Gastrocnemius medialis (tissue), 4 donors: ENCODE measurements at regions of chr16 and their contacts with region 1.

Region 1: DNA sequence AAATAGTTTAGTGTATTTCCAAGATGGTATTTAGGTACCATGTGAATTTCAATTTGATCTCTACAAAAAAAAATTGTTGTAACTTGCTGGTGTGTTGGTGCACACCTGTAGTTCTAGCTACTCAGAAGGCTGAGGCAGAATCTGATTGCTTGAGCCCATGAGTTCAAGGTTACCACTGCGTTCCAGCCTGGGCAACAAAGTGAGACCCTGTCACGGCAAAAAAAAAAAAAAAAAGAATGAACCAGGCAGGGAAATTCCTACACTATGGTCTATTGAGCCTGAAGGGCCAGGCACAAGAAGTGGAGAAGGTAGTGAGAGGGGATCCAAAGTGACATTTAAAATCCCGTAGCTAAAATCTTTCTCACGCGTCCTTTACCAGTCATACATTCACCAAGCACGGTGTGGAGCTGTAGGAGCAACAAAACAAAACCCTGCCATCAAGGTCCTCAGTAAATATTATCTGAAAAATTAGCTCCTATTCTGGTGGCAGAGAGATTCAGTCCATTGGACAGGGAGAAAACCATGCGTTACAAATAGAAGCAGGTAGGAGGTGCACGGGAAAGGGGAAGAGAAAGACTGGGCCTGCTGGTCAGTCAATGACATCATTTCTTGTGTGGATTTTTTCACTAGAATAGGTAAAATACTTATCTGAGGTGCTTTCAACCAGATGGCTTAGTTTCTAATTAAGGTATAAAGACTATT is 27.3 kb downstream of the TXNDC11 start:
- DNase-seq: no peak
- ATAC-seq: no peak
- H3K4me3 ChIP-seq: no peak overlapping the region
- H3K27ac ChIP-seq: peak overlapping the region; percentile 78 to 95 (median 88)
- H3K4me1 ChIP-seq: peaks cover 12 to 37% of the 10 kb centered on the region in 2 donors
- H3K27me3 ChIP-seq: no peaks in the 10 kb centered on the region
- CTCF ChIP-seq: no peak
- POLR2A ChIP-seq: no peak

Region 2: GRCh38 chr16:11396241-11397048 is 319.0 kb before region 1 on chr16:
- in situ Hi-C with region 1: loop called in 2 of 4 experiments (anchors 5 kb)
- intact Hi-C with region 1: loop called (anchors 2 kb)
- DNase-seq: peak; percentile 50 to 77
- ATAC-seq: peak; percentile 67 to 74
- H3K4me3 ChIP-seq: no peak overlapping the region
- H3K27ac ChIP-seq: peak overlapping the region in 2 of 4 donors; percentile 10 to 75
- H3K4me1 ChIP-seq: peaks cover 3 to 4% of the 10 kb centered on the region in 2 donors
- H3K27me3 ChIP-seq: no peaks in the 10 kb centered on the region
- CTCF ChIP-seq: peak; percentile 97 to 99 (median 98)
- POLR2A ChIP-seq: no peak

Region 3: DNA sequence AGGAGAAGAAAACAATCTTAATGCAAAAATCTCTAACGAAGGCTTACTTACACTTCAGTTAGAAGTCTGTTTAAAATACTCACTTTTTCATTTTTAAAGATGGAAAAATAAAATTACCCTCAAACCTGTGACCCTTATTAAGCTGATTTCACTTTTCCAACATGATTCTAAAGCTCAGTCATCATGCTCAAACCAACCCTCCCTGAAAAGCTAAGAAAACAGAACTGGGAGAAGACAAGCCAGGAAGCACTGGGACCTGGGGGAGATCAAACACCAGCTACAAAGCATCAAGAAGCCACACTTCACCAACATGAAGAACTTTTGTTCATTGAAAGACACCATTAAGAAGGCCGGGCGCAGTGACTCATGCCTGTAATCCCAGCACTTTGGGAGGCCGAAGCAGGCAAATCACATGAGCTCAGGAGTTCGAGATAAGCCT is 217.5 kb before region 1 on chr16:
- in situ Hi-C with region 1: no loop called
- intact Hi-C with region 1: loop called (anchors 10 kb)
- DNase-seq: peak in 1 of 2 donors; percentile 59
- ATAC-seq: no peak
- H3K4me3 ChIP-seq: no peak overlapping the region
- H3K27ac ChIP-seq: peak overlapping the region; percentile 84 to 96 (median 92)
- H3K4me1 ChIP-seq: peaks cover 33 to 34% of the 10 kb centered on the region in 2 donors
- H3K27me3 ChIP-seq: no peaks in the 10 kb centered on the region
- CTCF ChIP-seq: no peak
- POLR2A ChIP-seq: no peak

Region 4: DNA sequence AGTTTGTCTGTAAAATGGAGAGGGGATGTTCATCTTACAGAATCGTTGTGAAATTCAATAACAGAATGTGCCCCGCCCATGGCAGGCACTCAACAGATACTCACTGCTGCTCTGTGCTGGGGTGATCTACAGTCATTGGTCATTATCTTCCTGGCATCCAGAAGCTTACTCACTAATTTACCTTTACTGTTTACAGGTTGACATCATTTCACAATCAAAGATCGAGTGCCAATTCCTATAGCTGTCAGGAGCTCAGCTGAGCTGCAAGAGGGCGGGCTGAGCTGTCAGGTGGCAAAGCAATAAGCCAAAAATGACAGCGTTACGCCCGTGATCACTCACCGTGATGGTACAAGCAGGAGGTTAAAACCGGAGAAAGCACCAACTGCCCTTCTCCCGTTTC is 179.9 kb before region 1 on chr16:
- in situ Hi-C with region 1: loop called in 2 of 4 experiments (anchors 10 kb)
- intact Hi-C with region 1: loop called (anchors 2 kb)
- DNase-seq: no peak
- ATAC-seq: no peak
- H3K4me3 ChIP-seq: no peak overlapping the region
- H3K27ac ChIP-seq: no peak overlapping the region
- H3K4me1 ChIP-seq: no peaks in the 10 kb centered on the region
- H3K27me3 ChIP-seq: no peaks in the 10 kb centered on the region
- CTCF ChIP-seq: no peak
- POLR2A ChIP-seq: no peak

Region 5: DNA sequence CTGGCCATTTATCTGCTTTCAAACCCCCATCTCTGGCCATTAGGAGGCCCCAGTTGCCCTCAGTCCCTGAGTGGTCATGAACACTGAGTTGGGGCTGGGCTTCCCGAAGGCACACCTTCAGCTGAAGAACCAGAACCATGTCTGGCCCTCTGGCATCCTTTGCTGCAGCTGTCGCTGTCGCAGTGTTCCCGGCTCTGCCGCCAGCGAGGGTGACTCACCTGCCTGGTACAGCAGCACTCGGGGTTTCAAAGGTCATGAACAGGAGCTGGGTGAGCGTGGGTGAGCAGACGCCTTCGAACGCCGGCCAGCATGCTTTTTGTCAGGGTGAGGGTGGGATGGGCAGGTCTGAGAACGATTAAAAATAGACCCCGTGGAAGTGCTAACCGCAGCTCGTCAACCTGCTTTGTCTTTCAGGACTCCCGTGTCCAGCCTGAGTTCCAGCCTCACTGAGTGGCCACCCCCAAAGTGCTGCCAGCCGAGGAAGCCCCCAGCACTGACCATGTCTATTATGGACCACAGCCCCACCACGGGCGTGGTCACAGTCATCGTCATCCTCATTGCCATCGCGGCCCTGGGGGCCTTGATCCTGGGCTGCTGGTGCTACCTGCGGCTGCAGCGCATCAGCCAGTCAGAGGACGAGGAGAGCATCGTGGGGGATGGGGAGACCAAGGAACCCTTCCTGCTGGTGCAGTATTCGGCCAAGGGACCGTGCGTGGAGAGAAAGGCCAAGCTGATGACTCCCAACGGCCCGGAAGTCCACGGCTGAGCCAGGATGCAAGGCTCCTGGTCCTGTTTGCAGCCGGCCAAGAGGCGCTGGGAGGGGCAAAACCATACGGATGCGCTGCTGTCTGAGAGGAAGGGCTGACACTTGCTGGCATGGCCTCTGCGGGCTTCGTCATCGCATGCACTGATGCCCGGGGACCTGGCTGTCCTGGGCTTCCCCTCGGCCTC is 39.6 kb before region 1 on chr16:
- in situ Hi-C with region 1: no loop called
- intact Hi-C with region 1: loop called (anchors 2 kb)
- DNase-seq: peak; percentile 95 to 99
- ATAC-seq: peak; percentile 65 to 75
- H3K4me3 ChIP-seq: no peak overlapping the region
- H3K27ac ChIP-seq: peak overlapping the region; percentile 91 to 99 (median 97)
- H3K4me1 ChIP-seq: peaks cover 97 to 98% of the 10 kb centered on the region in 2 donors
- H3K27me3 ChIP-seq: no peaks in the 10 kb centered on the region
- CTCF ChIP-seq: peak in 1 of 5 experiments; percentile 29
- POLR2A ChIP-seq: peak; percentile 56 to 59